ENCODE measurements at regions of chr19 and their contacts with region 1.

Region 1: DNA sequence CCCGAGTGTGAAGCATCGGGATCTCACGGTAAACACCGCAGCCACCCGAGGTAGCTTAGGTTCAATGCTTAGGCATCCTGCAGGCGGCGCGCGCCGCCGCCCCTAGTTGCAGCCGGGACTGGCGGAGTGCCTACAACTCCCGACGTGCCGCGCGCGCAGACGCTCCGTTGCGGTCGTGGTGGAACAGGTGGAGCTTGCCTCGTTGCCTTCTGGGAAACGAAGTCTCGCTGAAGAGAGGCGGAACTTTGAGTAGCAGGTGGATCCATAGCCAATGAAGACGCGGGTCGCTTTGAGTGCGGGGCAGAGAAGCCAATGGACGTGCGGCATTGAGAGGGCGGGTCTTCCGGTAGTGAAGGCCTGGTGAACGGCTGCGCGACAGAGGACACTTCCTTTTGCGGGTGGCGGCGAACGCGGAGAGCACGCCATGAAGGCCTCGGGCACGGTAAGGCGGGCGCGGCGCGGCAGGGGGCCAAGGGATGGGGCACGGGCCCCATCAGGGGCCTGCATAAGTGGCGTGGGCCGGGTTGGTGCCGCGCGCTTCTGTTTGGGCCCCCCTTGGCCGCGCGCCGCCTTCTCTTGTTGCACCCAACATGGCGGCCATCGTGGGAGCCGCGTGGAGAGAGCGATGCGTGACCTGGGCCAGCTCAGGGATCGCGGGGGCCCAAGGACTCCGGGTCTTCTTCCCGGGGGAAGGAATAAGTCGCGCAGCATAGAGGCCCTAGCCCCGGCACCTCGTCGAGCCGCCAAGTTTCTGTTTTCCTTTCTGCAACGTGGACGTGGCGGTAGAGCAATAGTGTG is at the start of gene RPL18A:
- DNase-seq: peak; percentile 83 to 100 (median 98)
- ATAC-seq: peak; percentile 97
- H3K4me3 ChIP-seq: peak within 1 kb of the TSS; percentile 96
- H3K4me3 Mint-ChIP-seq: peak within 1 kb of the TSS; percentile 95 to 100 (median 98)
- H3K27ac ChIP-seq: peak within 1 kb of the TSS; percentile 84
- H3K27ac Mint-ChIP-seq: peak within 1 kb of the TSS; percentile 93 to 99 (median 98)
- H3K4me1 ChIP-seq: peaks cover 18 to 19% of the 10 kb centered on the region in 2 donors
- H3K4me1 Mint-ChIP-seq: peaks cover 17 to 48% (median 33%) of the 10 kb centered on the region in 7 donors
- H3K27me3 ChIP-seq: no peaks in the 10 kb centered on the region
- H3K27me3 Mint-ChIP-seq: peaks cover 0 to 5% (median 0%) of the 10 kb centered on the region in 5 donors
- total RNA-seq, gene RPL18A: 2,413 to 3,932 (median 3,224) TPM

Region 2: GRCh38 chr19:17441241-17442021 is 418.3 kb before region 1 on chr19:
- CTCF ChIA-PET with region 1: no interaction called
- POLR2A ChIA-PET with region 1: no interaction called
- intact Hi-C with region 1: loop called in 1 of 2 experiments (anchors 1 kb)
- DNase-seq: peak in 3 of 9 donors; percentile 14 to 35 (median 33)
- ATAC-seq: peak; percentile 54
- H3K4me3 ChIP-seq: no peak overlapping the region
- H3K4me3 Mint-ChIP-seq: no peak overlapping the region
- H3K27ac ChIP-seq: no peak overlapping the region
- H3K27ac Mint-ChIP-seq: no peak overlapping the region
- H3K4me1 ChIP-seq: no peaks in the 10 kb centered on the region
- H3K4me1 Mint-ChIP-seq: peaks cover 0 to 1% (median 0%) of the 10 kb centered on the region in 7 donors
- H3K27me3 ChIP-seq: no peaks in the 10 kb centered on the region
- H3K27me3 Mint-ChIP-seq: no peaks in the 10 kb centered on the region

Region 3: GRCh38 chr19:17579661-17580244 is 280.0 kb before region 1 on chr19:
- CTCF ChIA-PET with region 1: interaction called, 5 read pairs
- POLR2A ChIA-PET with region 1: no interaction called
- intact Hi-C with region 1: loop called in 1 of 2 experiments (anchors 1 kb)
- DNase-seq: peak in 3 of 9 donors; percentile 15 to 48 (median 30)
- ATAC-seq: peak; percentile 77
- H3K4me3 ChIP-seq: no peak overlapping the region
- H3K4me3 Mint-ChIP-seq: no peak overlapping the region
- H3K27ac ChIP-seq: no peak overlapping the region
- H3K27ac Mint-ChIP-seq: peak overlapping the region in 5 of 9 donors; percentile 37 to 68 (median 59)
- H3K4me1 ChIP-seq: no peaks in the 10 kb centered on the region
- H3K4me1 Mint-ChIP-seq: peaks cover 0 to 9% (median 0%) of the 10 kb centered on the region in 7 donors
- H3K27me3 ChIP-seq: no peaks in the 10 kb centered on the region
- H3K27me3 Mint-ChIP-seq: no peaks in the 10 kb centered on the region

Region 4: DNA sequence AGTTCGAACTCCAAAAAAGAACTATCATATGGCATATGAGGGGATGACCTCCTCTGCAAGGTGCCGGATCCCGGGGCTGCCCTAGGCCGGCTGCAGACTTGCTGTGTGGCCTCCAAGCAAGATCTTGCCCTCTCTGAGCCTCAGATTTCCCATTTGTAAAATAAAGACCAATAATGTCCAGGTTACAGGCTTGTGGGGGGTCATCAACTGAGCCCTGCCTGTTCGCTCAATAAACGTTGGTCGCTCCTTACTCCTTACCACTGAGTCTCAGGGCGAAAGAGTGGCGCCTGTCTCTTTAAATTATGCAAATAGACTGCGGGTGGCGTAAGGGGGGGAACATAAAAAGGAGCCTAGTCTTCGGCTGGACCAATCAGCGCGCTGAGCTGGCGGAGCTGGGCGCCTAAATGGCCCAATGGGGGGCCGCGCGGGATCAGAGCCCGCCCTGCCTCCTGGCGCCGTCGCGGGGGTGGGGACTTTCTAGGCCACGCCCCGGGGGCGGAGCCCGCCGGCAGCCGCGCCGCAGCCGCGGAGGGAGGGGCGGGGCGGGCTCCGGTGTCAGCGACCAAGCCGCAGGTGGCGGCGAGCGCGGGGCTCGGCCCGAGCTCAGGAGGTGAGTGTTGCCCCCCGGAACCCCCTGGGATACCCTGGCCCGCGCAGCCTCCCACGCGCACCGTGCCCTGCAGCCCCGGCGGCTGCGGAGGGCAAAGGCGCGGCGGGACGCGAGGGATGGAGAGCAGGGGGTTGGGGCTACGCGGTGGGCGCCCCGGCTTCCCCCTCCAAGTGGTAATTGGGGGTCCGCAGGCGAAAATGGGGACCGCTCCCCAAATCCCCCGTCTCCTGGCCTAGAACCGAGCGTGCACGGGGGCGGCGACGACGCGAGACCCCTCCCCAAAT is 112.3 kb before region 1 on chr19:
- CTCF ChIA-PET with region 1: interaction called, 5 read pairs
- POLR2A ChIA-PET with region 1: interaction called, 6 read pairs
- intact Hi-C with region 1: loop called in 1 of 2 experiments (anchors 1 kb)
- DNase-seq: peak; percentile 90 to 99 (median 95)
- ATAC-seq: peak; percentile 96
- H3K4me3 ChIP-seq: peak overlapping the region; percentile 59
- H3K4me3 Mint-ChIP-seq: peak overlapping the region; percentile 87 to 100 (median 94)
- H3K27ac ChIP-seq: peak overlapping the region; percentile 73
- H3K27ac Mint-ChIP-seq: peak overlapping the region; percentile 14 to 88 (median 72)
- H3K4me1 ChIP-seq: peaks cover 31 to 37% of the 10 kb centered on the region in 2 donors
- H3K4me1 Mint-ChIP-seq: peaks cover 35 to 49% (median 39%) of the 10 kb centered on the region in 7 donors
- H3K27me3 ChIP-seq: no peaks in the 10 kb centered on the region
- H3K27me3 Mint-ChIP-seq: no peaks in the 10 kb centered on the region

Region 5: GRCh38 chr19:17873786-17874757 is 14.3 kb after region 1 on chr19:
- CTCF ChIA-PET with region 1: interaction called, 5 read pairs
- POLR2A ChIA-PET with region 1: interaction called, 51 read pairs
- intact Hi-C with region 1: loop called (anchors 1 kb)
- DNase-seq: peak; percentile 42 to 75 (median 68)
- ATAC-seq: peak; percentile 92
- H3K4me3 ChIP-seq: peak overlapping the region; percentile 64
- H3K4me3 Mint-ChIP-seq: peak overlapping the region; percentile 73 to 88 (median 84)
- H3K27ac ChIP-seq: peak overlapping the region; percentile 47
- H3K27ac Mint-ChIP-seq: peak overlapping the region; percentile 18 to 85 (median 74)
- H3K4me1 ChIP-seq: peaks cover 10 to 11% of the 10 kb centered on the region in 2 donors
- H3K4me1 Mint-ChIP-seq: peaks cover 0 to 30% (median 10%) of the 10 kb centered on the region in 7 donors
- H3K27me3 ChIP-seq: no peaks in the 10 kb centered on the region
- H3K27me3 Mint-ChIP-seq: peaks cover 0 to 2% (median 0%) of the 10 kb centered on the region in 5 donors

Region 6: DNA sequence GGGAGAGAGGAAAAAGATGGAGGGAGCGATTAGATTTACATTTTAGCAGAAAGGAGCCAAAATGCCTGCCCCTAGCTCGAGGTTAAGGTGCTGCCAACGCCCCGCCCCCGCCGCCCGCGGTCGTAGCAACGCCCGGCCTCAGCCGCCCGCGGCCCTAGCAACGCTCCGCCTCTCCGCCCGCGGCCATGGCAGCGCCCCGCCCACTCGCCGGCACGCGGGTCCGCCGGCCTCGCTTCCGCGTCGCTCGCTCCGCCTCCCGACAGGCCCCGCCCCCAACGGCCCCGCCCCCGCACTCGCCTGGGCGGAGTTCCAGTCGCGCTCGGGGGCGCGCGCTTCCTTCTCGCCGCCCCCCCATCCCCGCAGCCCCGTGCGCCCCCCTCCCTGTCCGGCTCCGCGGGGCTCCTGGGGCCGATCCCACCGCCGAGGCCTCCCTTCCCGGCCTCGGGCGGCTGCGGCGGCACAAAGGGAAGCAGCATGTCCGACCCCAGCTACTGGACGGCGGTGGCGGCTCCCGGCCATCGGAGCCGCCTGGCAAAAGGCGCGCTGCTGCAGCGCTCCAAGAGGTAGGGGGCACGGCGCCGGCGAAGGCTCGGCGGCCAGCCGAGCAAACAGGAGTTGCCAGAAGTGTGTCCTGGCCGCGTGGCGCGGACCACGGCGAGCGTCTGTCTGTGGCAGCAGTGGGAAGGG is 258.1 kb after region 1 on chr19:
- CTCF ChIA-PET with region 1: no interaction called
- POLR2A ChIA-PET with region 1: no interaction called
- intact Hi-C with region 1: loop called in 1 of 2 experiments (anchors 10 kb)
- DNase-seq: peak; percentile 90 to 99 (median 95)
- ATAC-seq: peak; percentile 94
- H3K4me3 ChIP-seq: peak overlapping the region; percentile 71
- H3K4me3 Mint-ChIP-seq: peak overlapping the region; percentile 82 to 96 (median 90)
- H3K27ac ChIP-seq: peak overlapping the region; percentile 80
- H3K27ac Mint-ChIP-seq: peak overlapping the region; percentile 84 to 99 (median 96)
- H3K4me1 ChIP-seq: peaks cover 22 to 24% of the 10 kb centered on the region in 2 donors
- H3K4me1 Mint-ChIP-seq: peaks cover 24 to 47% (median 37%) of the 10 kb centered on the region in 7 donors
- H3K27me3 ChIP-seq: no peaks in the 10 kb centered on the region
- H3K27me3 Mint-ChIP-seq: no peaks in the 10 kb centered on the region

Region 7: DNA sequence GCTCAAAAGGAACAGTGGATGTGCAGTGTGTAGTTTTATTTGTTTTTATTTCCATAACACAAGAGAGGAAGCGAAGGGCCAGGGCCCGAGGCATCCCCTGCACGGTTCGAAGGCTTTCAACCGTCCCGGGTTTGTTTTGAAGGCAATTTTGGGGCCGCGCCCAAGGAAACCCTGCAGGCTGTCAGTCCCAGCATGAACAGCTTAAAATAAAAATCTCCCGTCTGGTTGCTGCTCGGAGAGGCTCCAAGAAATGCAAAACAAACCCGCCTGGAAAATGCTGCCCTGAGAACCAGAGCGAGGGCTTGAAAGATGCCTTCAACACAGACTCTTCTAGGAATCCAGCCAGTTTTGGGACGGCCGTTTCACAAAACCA is 447.1 kb after region 1 on chr19:
- CTCF ChIA-PET with region 1: no interaction called
- POLR2A ChIA-PET with region 1: no interaction called
- intact Hi-C with region 1: no loop called
- DNase-seq: peak in 3 of 9 donors; percentile 10 to 39 (median 22)
- ATAC-seq: no peak
- H3K4me3 ChIP-seq: no peak overlapping the region
- H3K4me3 Mint-ChIP-seq: peak overlapping the region; percentile 54 to 98 (median 90)
- H3K27ac ChIP-seq: peak overlapping the region; percentile 97
- H3K27ac Mint-ChIP-seq: peak overlapping the region; percentile 82 to 99 (median 96)
- H3K4me1 ChIP-seq: peaks cover 31 to 37% of the 10 kb centered on the region in 2 donors
- H3K4me1 Mint-ChIP-seq: peaks cover 16 to 53% (median 42%) of the 10 kb centered on the region in 7 donors
- H3K27me3 ChIP-seq: no peaks in the 10 kb centered on the region
- H3K27me3 Mint-ChIP-seq: no peaks in the 10 kb centered on the region